ENCODE measurements at regions of chr13 and their contacts with region 1.

Region 1: DNA sequence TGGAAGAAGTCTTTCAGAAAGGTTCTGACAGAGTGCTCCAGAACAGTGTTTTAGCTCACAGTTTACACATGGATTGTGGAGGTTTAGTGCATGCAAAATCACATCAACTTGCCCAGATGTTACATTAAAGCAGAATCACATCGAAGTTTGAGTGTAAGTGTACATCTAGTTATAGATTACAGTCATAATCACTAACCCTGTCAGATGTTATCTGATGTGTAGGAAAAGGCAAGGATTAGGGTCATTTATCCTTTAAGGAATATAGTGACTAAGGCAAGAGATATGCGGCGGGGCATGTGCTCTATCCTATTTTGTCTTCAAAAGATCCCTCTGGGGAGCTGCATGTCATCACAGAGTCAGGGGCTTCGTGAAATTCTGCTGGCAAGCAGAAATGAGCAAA is 66.9 kb downstream of the CYSLTR2 start:
- DNase-seq: no peak
- ATAC-seq: no peak
- H3K4me3 Mint-ChIP-seq: no peak overlapping the region
- H3K27ac Mint-ChIP-seq: no peak overlapping the region
- H3K4me1 Mint-ChIP-seq: no peaks in the 10 kb centered on the region
- H3K27me3 Mint-ChIP-seq: no peaks in the 10 kb centered on the region
- CTCF ChIP-seq: no peak

Region 2: DNA sequence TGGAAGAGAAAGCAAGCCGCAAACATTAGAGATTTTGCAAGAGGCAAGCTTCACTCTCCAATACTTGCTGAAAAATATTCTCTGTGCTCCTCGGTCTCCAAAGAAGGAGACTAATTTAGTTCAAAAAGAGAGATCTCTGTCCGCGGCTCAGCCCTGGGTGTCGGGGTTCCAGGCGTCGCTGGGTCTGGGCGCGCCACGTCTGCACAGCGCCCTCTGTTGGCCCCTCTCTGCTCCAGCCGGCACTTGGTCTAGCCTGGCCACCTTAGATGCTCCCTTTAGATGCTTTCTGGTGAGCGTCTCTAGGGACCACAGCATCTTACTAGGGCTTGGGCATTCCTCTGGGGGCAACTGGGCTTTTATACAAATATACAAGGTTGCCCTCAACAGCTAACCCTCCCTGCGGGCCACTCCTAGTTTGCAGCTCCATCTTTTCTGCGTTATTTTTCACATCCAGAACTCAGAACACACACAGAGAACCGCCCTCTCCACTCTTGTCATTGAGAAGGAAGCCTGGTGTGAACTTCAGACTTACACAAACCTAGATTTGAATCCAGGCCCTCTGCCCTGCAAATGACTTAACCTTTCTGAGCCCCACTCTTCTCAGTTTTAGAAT is 11.4 kb after region 1 on chr13:
- CTCF ChIA-PET with region 1: interaction called, 30 read pairs
- POLR2A ChIA-PET with region 1: no interaction called
- intact Hi-C with region 1: no loop called
- DNase-seq: peak; percentile 66
- ATAC-seq: peak; percentile 87
- H3K4me3 Mint-ChIP-seq: peak overlapping the region; percentile 48
- H3K27ac Mint-ChIP-seq: no peak overlapping the region
- H3K4me1 Mint-ChIP-seq: peaks cover 8% of the 10 kb centered on the region
- H3K27me3 Mint-ChIP-seq: peaks cover 4% of the 10 kb centered on the region
- CTCF ChIP-seq: peak; percentile 84